ENCODE measurements at regions of chr18 and their contacts with region 1.

Region 1: DNA sequence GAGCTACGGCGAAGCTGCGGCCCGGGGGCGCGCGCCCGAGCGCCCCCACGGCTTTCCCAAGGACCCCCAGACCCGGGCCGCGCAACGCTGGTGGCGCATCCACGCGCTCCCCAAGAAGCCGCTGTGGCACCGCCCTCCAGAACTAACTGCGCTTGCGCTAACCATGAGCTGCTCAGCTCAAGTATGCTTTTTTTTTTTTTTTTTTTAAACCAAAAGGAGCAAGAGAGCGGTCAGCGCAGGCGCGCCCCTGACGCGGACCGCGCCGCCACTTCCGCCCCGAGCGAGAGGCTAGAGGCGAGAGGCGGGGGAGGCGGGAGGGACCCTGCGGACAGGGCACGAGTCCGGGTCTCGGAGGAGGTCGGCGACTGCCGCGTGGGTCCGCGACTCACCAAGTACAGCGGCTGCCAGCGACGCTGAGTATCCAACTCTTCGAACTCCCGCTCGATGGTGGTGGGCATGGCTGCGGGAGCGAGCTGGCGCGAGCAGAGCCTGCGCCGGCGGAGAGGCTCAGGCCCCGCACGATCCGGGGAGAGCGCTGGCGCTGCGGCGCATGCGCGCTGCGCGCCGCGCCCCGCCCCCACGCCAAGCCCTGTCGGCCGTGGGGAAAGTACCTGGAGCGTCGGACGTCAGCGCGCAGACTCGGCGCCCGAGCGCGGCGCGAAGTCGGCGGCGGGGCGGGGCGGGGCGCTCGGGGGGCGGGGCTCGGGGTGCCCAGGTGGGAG is at the start of gene PTPN2:
- DNase-seq: peak; percentile 83 to 98 (median 90)
- ATAC-seq: peak; percentile 87
- H3K4me3 ChIP-seq: peak within 1 kb of the TSS; percentile 77
- H3K4me3 Mint-ChIP-seq: peak within 1 kb of the TSS; percentile 97
- H3K27ac ChIP-seq: peak within 1 kb of the TSS; percentile 99
- H3K27ac Mint-ChIP-seq: peak within 1 kb of the TSS; percentile 99
- H3K4me1 ChIP-seq: peaks cover 44% of the 10 kb centered on the region
- H3K4me1 Mint-ChIP-seq: peaks cover 64% of the 10 kb centered on the region
- H3K27me3 ChIP-seq: no peaks in the 10 kb centered on the region
- H3K27me3 Mint-ChIP-seq: no peaks in the 10 kb centered on the region
- CTCF ChIP-seq: no peak
- total RNA-seq, gene PTPN2: 49.4 to 53.8 TPM

Region 2: GRCh38 chr18:12478269-12479047 is 405.4 kb before region 1 on chr18:
- CTCF ChIA-PET with region 1: no interaction called
- POLR2A ChIA-PET with region 1: no interaction called
- intact Hi-C with region 1: no loop called
- DNase-seq: no peak
- ATAC-seq: no peak
- H3K4me3 ChIP-seq: no peak overlapping the region
- H3K4me3 Mint-ChIP-seq: no peak overlapping the region
- H3K27ac ChIP-seq: no peak overlapping the region
- H3K27ac Mint-ChIP-seq: no peak overlapping the region
- H3K4me1 ChIP-seq: no peaks in the 10 kb centered on the region
- H3K4me1 Mint-ChIP-seq: no peaks in the 10 kb centered on the region
- H3K27me3 ChIP-seq: no peaks in the 10 kb centered on the region
- H3K27me3 Mint-ChIP-seq: no peaks in the 10 kb centered on the region
- CTCF ChIP-seq: no peak

Region 3: DNA sequence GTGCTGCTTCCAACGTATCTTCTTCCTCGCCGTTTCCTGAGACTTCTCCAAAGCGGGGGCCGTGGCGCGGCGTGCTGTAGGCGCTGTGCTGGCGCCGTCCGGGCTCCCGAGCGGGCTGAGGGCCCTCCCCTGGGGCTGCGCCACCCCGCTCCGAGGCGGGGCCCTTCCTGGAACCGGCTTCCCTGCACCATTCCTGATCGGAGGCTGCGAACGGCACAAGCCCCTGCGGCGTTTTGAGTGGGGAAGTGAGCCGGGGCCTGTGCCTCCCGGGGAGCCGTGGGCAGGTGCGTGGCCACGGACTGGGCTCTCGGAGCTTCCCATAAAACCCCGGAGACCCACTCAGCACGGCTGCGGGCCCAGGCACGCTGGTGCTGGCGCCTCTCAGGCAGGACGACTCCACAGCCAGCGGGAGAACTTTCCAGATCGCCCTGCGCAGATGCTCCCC is 106.3 kb before region 1 on chr18:
- CTCF ChIA-PET with region 1: no interaction called
- POLR2A ChIA-PET with region 1: interaction called, 37 read pairs
- intact Hi-C with region 1: no loop called
- DNase-seq: no peak
- ATAC-seq: no peak
- H3K4me3 ChIP-seq: peak overlapping the region; percentile 43
- H3K4me3 Mint-ChIP-seq: no peak overlapping the region
- H3K27ac ChIP-seq: no peak overlapping the region
- H3K27ac Mint-ChIP-seq: no peak overlapping the region
- H3K4me1 ChIP-seq: peaks cover 4% of the 10 kb centered on the region
- H3K4me1 Mint-ChIP-seq: peaks cover 26% of the 10 kb centered on the region
- H3K27me3 ChIP-seq: no peaks in the 10 kb centered on the region
- H3K27me3 Mint-ChIP-seq: no peaks in the 10 kb centered on the region
- CTCF ChIP-seq: no peak

Region 4: DNA sequence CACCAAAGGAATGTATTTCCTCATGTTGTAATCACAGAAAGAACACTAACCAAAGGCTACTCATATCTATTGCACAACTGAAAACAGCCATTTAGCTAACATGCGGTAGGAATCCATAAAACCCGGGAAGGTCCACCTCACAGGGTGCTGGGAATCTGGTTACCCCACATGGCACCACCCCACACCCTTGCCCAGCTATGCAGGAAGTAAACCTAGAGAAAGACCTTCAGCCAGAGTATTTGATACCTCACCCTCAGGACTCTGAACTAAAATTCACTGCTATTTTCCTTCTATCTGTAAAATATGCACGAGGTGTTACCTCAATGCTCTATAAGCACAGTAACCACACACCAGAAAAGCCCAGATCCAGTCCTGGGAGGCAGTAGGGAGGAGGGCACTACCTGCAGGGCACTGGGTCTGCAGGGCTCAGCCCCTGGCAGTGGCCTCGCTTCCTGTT is 45.6 kb before region 1 on chr18:
- CTCF ChIA-PET with region 1: interaction called, 3 read pairs
- POLR2A ChIA-PET with region 1: interaction called, 24 read pairs
- intact Hi-C with region 1: loop called (anchors 2 to 5 kb)
- DNase-seq: peak in 3 of 14 experiments; percentile 33 to 40 (median 39)
- ATAC-seq: no peak
- H3K4me3 ChIP-seq: peak overlapping the region; percentile 35
- H3K4me3 Mint-ChIP-seq: peak overlapping the region; percentile 30
- H3K27ac ChIP-seq: peak overlapping the region in 1 of 2 donors; percentile 81
- H3K27ac Mint-ChIP-seq: peak overlapping the region; percentile 77
- H3K4me1 ChIP-seq: peaks cover 24% of the 10 kb centered on the region
- H3K4me1 Mint-ChIP-seq: peaks cover 55% of the 10 kb centered on the region
- H3K27me3 ChIP-seq: no peaks in the 10 kb centered on the region
- H3K27me3 Mint-ChIP-seq: no peaks in the 10 kb centered on the region
- CTCF ChIP-seq: no peak

Region 5: DNA sequence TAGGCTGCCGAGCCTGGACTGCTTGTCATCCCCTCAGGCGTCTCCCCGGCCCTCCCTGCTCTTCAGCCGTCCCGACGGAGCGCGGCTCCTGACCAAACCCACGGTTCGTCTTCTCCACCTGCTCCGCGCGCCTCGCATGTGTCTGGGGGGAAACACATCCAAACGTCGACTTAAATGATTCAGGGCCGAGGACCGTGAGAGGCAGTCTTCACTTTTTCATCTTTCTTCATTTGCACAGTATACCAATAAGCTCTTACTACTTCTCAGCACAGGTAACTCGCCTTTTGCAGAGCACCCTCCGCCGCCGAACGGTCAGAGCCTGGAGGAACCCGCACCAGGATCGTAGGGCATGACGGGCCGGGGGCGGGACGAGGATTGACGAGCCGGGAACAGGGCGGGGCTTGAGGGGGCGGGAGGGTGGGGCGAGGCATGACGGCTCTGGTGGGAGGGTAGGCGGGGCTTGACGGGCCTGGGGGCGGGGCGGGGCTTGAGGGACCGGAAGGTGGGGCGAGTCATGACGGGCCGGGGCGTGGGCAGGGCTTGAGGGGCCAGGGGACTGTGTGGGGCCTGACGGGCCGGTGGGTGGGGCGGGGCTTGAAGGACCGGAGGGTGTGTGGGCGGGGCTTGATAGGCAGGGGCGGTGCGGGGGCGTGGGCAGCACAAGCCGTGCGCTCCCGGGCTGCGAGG is 63.7 kb after region 1 on chr18 and contains the start of gene SEH1L:
- CTCF ChIA-PET with region 1: no interaction called
- POLR2A ChIA-PET with region 1: interaction called, 45 read pairs
- intact Hi-C with region 1: loop called (anchors 1 to 2 kb)
- DNase-seq: peak; percentile 96 to 100 (median 99)
- ATAC-seq: peak; percentile 80
- H3K4me3 ChIP-seq: peak within 1 kb of the TSS; percentile 69
- H3K4me3 Mint-ChIP-seq: peak within 1 kb of the TSS; percentile 92
- H3K27ac ChIP-seq: peak within 1 kb of the TSS; percentile 93 to 96
- H3K27ac Mint-ChIP-seq: peak within 1 kb of the TSS; percentile 96
- H3K4me1 ChIP-seq: peaks cover 38% of the 10 kb centered on the region
- H3K4me1 Mint-ChIP-seq: peaks cover 38% of the 10 kb centered on the region
- H3K27me3 ChIP-seq: no peaks in the 10 kb centered on the region
- H3K27me3 Mint-ChIP-seq: no peaks in the 10 kb centered on the region
- CTCF ChIP-seq: no peak
- total RNA-seq, gene SEH1L: 23.9 to 26.7 TPM

Region 6: DNA sequence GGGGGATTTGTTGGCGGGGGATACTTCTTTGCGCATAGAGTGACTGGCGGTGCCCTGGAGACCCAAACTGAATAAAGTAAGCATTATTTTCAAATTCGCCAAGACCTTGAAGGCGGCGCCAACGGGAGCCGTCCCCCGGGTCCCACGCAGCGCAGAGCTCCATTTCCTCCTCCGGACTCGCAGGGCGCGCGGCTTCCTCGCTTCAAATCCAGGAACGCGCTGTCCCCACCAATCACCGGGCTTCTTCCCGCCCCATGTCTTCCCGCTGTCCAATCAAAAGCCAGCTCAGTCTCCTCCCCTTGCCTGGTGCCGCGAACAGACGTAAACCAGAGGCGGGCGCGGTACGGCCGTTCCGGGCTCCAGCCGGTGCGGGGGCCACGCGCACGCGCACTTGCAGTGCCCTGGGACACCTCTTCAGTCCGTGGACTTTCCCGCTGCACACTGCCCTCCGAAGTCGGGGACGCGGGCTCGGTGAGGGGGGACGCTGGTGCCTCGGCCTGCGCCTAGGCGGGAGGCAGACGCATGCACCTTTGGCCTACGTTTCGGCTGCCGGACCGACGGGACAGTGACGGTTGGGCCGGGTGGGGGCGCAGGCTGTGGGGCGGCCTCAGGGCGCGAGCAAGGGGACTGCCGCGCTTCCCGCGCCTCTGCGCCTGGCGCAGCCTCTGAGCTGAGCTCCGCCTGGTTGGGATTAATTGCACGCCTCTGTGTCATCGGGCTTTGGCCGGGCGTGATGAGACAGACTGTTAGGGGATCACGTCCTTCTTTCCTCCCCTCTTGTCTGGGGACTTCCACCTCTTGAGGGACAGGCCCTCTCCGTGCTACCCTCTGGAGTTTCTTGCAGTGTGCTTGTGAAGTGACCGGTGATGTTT is 107.4 kb after region 1 on chr18 and contains the start of gene CEP192:
- CTCF ChIA-PET with region 1: no interaction called
- POLR2A ChIA-PET with region 1: interaction called, 15 read pairs
- intact Hi-C with region 1: loop called in 1 of 2 experiments (anchors 5 kb)
- DNase-seq: peak; percentile 94 to 99 (median 95)
- ATAC-seq: peak; percentile 97
- H3K4me3 ChIP-seq: peak within 1 kb of the TSS; percentile 85
- H3K4me3 Mint-ChIP-seq: no peak within 1 kb of the TSS
- H3K27ac ChIP-seq: peak within 1 kb of the TSS; percentile 61 to 84
- H3K27ac Mint-ChIP-seq: peak within 1 kb of the TSS; percentile 83
- H3K4me1 ChIP-seq: peaks cover 32% of the 10 kb centered on the region
- H3K4me1 Mint-ChIP-seq: peaks cover 21% of the 10 kb centered on the region
- H3K27me3 ChIP-seq: no peaks in the 10 kb centered on the region
- H3K27me3 Mint-ChIP-seq: no peaks in the 10 kb centered on the region
- CTCF ChIP-seq: no peak
- total RNA-seq, gene CEP192: 23.4 to 25.0 TPM

Measured in CD4-positive, alpha-beta T cell (primary cell).